T-cell (primary cell): ENCODE measurements at regions of chr2 and their contacts with region 1.

Region 1: GRCh38 chr2:105890111-105890510 is 145.4 kb downstream of the NCK2 start:
- DNase-seq: no peak
- ATAC-seq: no peak
- H3K4me3 ChIP-seq: no peak overlapping the region
- H3K4me3 Mint-ChIP-seq: peak overlapping the region in 1 of 3 donors; percentile 4
- H3K27ac ChIP-seq: peak overlapping the region; percentile 13
- H3K27ac Mint-ChIP-seq: peak overlapping the region; percentile 53 to 71
- H3K4me1 ChIP-seq: peaks cover 2 to 37% of the 10 kb centered on the region in 2 experiments
- H3K4me1 Mint-ChIP-seq: peaks cover 61 to 63% (median 62%) of the 10 kb centered on the region in 3 donors
- H3K27me3 ChIP-seq: no peaks in the 10 kb centered on the region
- H3K27me3 Mint-ChIP-seq: no peaks in the 10 kb centered on the region

Region 2: GRCh38 chr2:105652014-105652796 is 237.9 kb before region 1 on chr2:
- CTCF ChIA-PET with region 1: no interaction called
- POLR2A ChIA-PET with region 1: interaction called in 1 of 2 experiments, 10 read pairs
- DNase-seq: no peak
- ATAC-seq: no peak
- H3K4me3 ChIP-seq: no peak overlapping the region
- H3K4me3 Mint-ChIP-seq: no peak overlapping the region
- H3K27ac ChIP-seq: no peak overlapping the region
- H3K27ac Mint-ChIP-seq: no peak overlapping the region
- H3K4me1 ChIP-seq: no peaks in the 10 kb centered on the region
- H3K4me1 Mint-ChIP-seq: peaks cover 0 to 3% (median 0%) of the 10 kb centered on the region in 3 donors
- H3K27me3 ChIP-seq: no peaks in the 10 kb centered on the region
- H3K27me3 Mint-ChIP-seq: peaks cover 0 to under 1% of the 10 kb centered on the region in 2 donors

Region 3: GRCh38 chr2:105919826-105920225 is 29.7 kb after region 1 on chr2:
- CTCF ChIA-PET with region 1: no interaction called
- POLR2A ChIA-PET with region 1: no interaction called
- DNase-seq: peak; percentile 16 to 73 (median 47)
- ATAC-seq: peak; percentile 27 to 44 (median 36)
- H3K4me3 ChIP-seq: no peak overlapping the region
- H3K4me3 Mint-ChIP-seq: no peak overlapping the region
- H3K27ac ChIP-seq: no peak overlapping the region
- H3K27ac Mint-ChIP-seq: peak overlapping the region in 1 of 2 donors; percentile 81
- H3K4me1 ChIP-seq: peaks cover 10 to 19% of the 10 kb centered on the region in 2 experiments
- H3K4me1 Mint-ChIP-seq: peaks cover 48 to 57% (median 50%) of the 10 kb centered on the region in 3 donors
- H3K27me3 ChIP-seq: no peaks in the 10 kb centered on the region
- H3K27me3 Mint-ChIP-seq: no peaks in the 10 kb centered on the region